Endothelial cell of umbilical vein (primary cell): ENCODE measurements at regions of chr12 and their contacts with region 1.

Region 1: DNA sequence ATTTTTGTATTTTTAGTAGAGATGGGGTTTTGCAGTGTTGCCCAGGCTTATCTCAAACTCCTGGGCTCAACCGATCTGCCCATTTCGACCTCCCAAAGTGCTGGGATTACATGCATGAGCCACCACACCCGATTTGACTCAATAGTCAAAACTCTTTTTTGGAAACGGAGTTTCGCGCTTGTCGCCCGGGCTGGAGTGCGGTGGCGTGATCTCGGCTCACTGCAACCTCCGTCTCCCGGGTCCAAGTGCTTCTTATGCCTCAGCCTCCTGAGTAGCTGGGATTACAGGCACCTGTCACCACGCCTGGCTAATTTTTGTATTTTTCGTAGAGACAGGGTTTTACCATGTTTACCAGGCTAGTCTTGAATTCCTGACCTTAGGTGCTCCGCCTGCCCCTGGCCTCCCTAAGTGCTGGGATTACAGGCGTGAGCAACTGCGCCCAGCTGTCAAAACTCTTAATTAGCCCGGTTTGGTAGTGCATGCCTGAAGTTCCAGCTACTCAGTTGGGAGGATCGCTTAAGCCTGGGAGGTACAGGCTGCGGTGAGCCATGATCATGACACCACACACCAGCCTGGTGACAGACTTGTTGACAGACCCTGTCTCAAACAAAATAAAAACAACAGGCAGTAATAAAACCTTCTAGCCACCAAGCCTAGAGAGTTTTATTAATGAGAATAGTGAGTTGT is 12.4 kb downstream of the MED21 start:
- DNase-seq: no peak
- H3K4me3 ChIP-seq: no peak overlapping the region
- H3K27ac ChIP-seq: no peak overlapping the region
- H3K4me1 ChIP-seq: no peaks in the 10 kb centered on the region
- H3K27me3 ChIP-seq: no peaks in the 10 kb centered on the region
- CTCF ChIP-seq: no peak
- POLR2A ChIP-seq: no peak

Region 2: DNA sequence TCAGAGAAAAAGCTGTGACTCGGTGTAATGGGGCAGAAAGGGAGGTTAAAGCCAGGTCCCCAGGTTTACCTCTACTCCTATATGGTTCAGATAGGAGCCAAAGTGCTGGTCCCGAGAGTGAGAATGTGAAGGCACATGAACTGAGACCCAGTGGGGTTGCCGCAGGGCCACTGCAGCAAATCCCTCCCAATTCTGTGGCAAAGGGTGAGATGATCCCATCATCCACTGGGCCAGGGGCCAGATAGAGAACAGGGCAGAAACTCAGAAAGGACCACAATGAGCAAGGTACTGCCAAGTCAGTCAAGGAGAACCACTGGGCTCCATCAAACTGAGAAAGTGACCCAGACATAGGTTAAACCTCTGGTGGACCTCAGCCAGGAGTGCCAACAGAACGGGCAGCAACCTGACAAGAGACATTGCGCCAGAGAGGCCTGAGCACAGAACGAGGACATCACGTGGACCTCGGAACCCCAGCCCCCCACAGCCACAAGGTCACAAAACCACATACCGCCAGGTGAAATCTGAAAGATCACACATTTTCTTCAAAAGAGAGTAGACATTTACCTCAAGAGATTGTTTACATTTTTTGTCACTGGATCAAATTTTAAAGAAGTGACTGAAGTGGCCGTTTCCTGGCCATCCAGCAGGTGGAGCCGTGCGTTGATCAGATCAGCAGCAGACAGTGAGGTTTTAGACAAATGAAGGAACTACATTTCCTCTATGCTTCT is 181.3 kb before region 1 on chr12:
- CTCF ChIA-PET with region 1: no interaction called
- POLR2A ChIA-PET with region 1: no interaction called
- dilution Hi-C with region 1: no loop called
- intact Hi-C with region 1: no loop called
- DNase-seq: peak; percentile 74
- H3K4me3 ChIP-seq: no peak overlapping the region
- H3K27ac ChIP-seq: no peak overlapping the region
- H3K4me1 ChIP-seq: peaks cover 32% of the 10 kb centered on the region
- H3K27me3 ChIP-seq: no peaks in the 10 kb centered on the region
- CTCF ChIP-seq: peak; percentile 77 to 94
- POLR2A ChIP-seq: no peak

Region 3: GRCh38 chr12:27123642-27124041 is 88.9 kb after region 1 on chr12:
- CTCF ChIA-PET with region 1: no interaction called
- POLR2A ChIA-PET with region 1: no interaction called
- dilution Hi-C with region 1: no loop called
- intact Hi-C with region 1: loop called (anchors 1 kb)
- DNase-seq: peak; percentile 14
- H3K4me3 ChIP-seq: no peak overlapping the region
- H3K27ac ChIP-seq: no peak overlapping the region
- H3K4me1 ChIP-seq: no peaks in the 10 kb centered on the region
- H3K27me3 ChIP-seq: no peaks in the 10 kb centered on the region
- CTCF ChIP-seq: peak in 1 of 2 donors; percentile 1
- POLR2A ChIP-seq: no peak

Region 4: GRCh38 chr12:27142101-27142721 is 107.5 kb after region 1 on chr12:
- CTCF ChIA-PET with region 1: interaction called, 8 read pairs
- POLR2A ChIA-PET with region 1: no interaction called
- dilution Hi-C with region 1: no loop called
- intact Hi-C with region 1: loop called (anchors 1 kb)
- DNase-seq: peak; percentile 83
- H3K4me3 ChIP-seq: no peak overlapping the region
- H3K27ac ChIP-seq: no peak overlapping the region
- H3K4me1 ChIP-seq: peaks cover 2% of the 10 kb centered on the region
- H3K27me3 ChIP-seq: no peaks in the 10 kb centered on the region
- CTCF ChIP-seq: peak; percentile 79 to 86
- POLR2A ChIP-seq: no peak